ENCODE measurements at regions of chr1 and their contacts with region 1.

Region 1: GRCh38 chr1:222736972-222737371 is at the start of gene FAM177B:
- DNase-seq: no peak
- ATAC-seq: no peak
- H3K4me3 ChIP-seq: no peak within 1 kb of the TSS
- H3K27ac ChIP-seq: no peak within 1 kb of the TSS
- H3K4me1 ChIP-seq: no peaks in the 10 kb centered on the region
- H3K27me3 ChIP-seq: no peaks in the 10 kb centered on the region
- total RNA-seq, gene FAM177B: 0.18 TPM in 1 of 2 donors, not detected in the other

Region 2: DNA sequence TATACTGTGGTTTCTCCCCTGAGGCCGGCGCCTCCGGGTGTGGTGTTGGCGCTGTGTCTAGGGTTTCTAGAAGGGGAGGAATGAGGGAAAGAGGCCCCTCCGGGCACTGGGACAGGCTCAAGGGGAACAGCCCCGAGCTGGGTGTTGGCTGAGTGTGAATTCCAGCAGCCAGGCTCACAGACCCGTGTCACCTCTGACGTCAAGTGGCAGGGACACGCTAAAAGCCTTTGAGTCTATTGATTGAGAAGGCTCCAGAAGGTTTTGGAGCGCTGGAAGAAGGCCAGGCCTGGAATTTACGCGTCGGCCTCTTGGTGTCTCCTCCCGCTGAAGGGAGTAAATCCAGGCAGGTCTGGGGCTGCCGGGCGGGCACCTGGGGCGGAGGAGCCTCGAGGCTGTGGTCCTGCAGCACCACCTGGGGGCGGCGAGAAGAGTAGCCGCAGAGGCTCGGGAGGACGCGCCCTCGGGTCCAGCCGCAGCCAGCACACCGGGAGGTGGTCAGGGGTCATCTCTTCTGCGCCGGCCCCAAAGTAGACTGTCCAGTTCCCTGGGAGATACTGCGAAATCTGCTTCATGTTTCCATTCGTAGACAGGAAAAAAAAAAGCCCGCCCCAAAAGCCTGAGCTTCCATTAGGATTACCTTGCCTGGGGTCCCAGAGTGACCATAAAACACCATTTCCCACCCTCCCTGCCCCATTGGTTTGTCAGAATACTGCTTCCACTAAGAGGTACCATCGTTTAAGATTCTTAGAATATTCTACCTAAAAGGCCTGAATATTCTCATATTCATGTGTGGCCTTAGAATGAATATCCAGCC is 344.4 kb after region 1 on chr1:
- intact Hi-C with region 1: loop called in 1 of 2 experiments (anchors 5 kb)
- DNase-seq: peak; percentile 87 to 93
- ATAC-seq: peak; percentile 94
- H3K4me3 ChIP-seq: peak overlapping the region in 1 of 2 donors; percentile 44
- H3K27ac ChIP-seq: peak overlapping the region in 1 of 2 donors; percentile 20
- H3K4me1 ChIP-seq: no peaks in the 10 kb centered on the region
- H3K27me3 ChIP-seq: no peaks in the 10 kb centered on the region

Region 3: GRCh38 chr1:223087291-223088255 is 350.6 kb after region 1 on chr1:
- intact Hi-C with region 1: loop called (anchors 2 to 5 kb)
- DNase-seq: no peak
- ATAC-seq: no peak
- H3K4me3 ChIP-seq: no peak overlapping the region
- H3K27ac ChIP-seq: no peak overlapping the region
- H3K4me1 ChIP-seq: no peaks in the 10 kb centered on the region
- H3K27me3 ChIP-seq: no peaks in the 10 kb centered on the region

Measured in aorta (tissue), 5 donors.